ENCODE measurements at regions of chr14 and their contacts with region 1.

Region 1: DNA sequence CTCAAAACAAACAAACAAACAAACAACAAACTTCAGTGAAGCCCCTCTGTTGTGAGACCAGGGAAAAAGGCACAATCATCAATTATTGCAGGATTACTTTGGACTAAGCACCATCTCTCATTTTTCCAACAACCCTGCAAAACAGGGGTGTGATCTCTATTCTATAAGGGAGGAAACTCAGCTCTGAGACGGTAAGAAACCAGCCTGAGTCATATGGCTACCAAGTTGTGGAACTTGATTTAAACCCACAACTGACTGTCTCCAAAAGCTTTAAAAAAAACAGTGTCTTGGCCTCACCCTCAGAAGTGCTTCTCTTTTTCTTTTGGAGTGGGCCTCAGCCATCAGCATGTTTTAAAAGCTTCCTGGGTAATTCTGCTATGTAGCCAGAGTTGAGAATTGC is 49.8 kb downstream of the RIN3 start:
- DNase-seq: no peak
- ATAC-seq: peak; percentile 66
- H3K4me3 ChIP-seq: no peak overlapping the region
- H3K4me3 Mint-ChIP-seq: peak overlapping the region in 1 of 10 donors; percentile 10
- H3K27ac ChIP-seq: no peak overlapping the region
- H3K27ac Mint-ChIP-seq: peak overlapping the region in 2 of 9 donors; percentile 21 to 68
- H3K4me1 ChIP-seq: peaks cover 5 to 9% of the 10 kb centered on the region in 2 donors
- H3K4me1 Mint-ChIP-seq: peaks cover 15 to 64% (median 38%) of the 10 kb centered on the region in 7 donors
- H3K27me3 ChIP-seq: no peaks in the 10 kb centered on the region
- H3K27me3 Mint-ChIP-seq: no peaks in the 10 kb centered on the region

Region 2: GRCh38 chr14:92577321-92577742 is 14.0 kb after region 1 on chr14:
- CTCF ChIA-PET with region 1: interaction called, 3 read pairs
- POLR2A ChIA-PET with region 1: interaction called, 4 read pairs
- intact Hi-C with region 1: loop called in 1 of 2 experiments (anchors 2 kb)
- DNase-seq: peak in 3 of 9 donors; percentile 37 to 46 (median 38)
- ATAC-seq: peak; percentile 78
- H3K4me3 ChIP-seq: peak overlapping the region; percentile 39
- H3K4me3 Mint-ChIP-seq: peak overlapping the region; percentile 70 to 89 (median 80)
- H3K27ac ChIP-seq: peak overlapping the region; percentile 49
- H3K27ac Mint-ChIP-seq: peak overlapping the region; percentile 69 to 93 (median 86)
- H3K4me1 ChIP-seq: peaks cover 36 to 51% of the 10 kb centered on the region in 2 donors
- H3K4me1 Mint-ChIP-seq: peaks cover 36 to 77% (median 68%) of the 10 kb centered on the region in 7 donors
- H3K27me3 ChIP-seq: no peaks in the 10 kb centered on the region
- H3K27me3 Mint-ChIP-seq: peaks cover 0 to 48% (median 0%) of the 10 kb centered on the region in 5 donors